ENCODE measurements at regions of chr9 and their contacts with region 1.

Region 1: GRCh38 chr9:36873247-36873875 is 160.7 kb downstream of the PAX5 start:
- DNase-seq: peak; percentile 81
- H3K4me3 Mint-ChIP-seq: no peak overlapping the region
- H3K27ac Mint-ChIP-seq: no peak overlapping the region
- H3K4me1 Mint-ChIP-seq: no peaks in the 10 kb centered on the region
- H3K27me3 Mint-ChIP-seq: peaks cover under 1% of the 10 kb centered on the region

Region 2: DNA sequence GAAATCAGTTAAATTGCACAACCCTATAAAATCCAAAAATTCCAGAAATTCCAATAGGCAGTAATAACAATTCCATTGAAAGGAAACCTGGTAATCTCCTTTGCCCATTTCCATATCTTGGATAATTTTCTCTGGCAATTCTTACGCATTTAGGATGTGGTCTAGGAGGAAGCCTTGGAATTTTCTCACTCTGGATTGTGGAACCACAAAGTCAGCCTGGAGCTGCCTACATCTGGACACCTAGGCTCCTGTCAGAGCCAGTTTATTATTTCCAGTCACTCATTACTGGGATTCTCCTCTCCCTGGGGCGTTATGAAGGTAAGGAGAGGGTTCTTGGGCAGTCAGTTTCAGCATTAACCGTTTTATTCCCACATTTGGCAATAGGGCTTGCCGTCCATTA is 574.8 kb before region 1 on chr9:
- CTCF ChIA-PET with region 1: no interaction called
- POLR2A ChIA-PET with region 1: no interaction called
- intact Hi-C with region 1: no loop called
- DNase-seq: no peak
- H3K4me3 Mint-ChIP-seq: no peak overlapping the region
- H3K27ac Mint-ChIP-seq: no peak overlapping the region
- H3K4me1 Mint-ChIP-seq: no peaks in the 10 kb centered on the region
- H3K27me3 Mint-ChIP-seq: no peaks in the 10 kb centered on the region

Region 3: GRCh38 chr9:36855448-36856315 is 17.7 kb before region 1 on chr9:
- CTCF ChIA-PET with region 1: interaction called, 36 read pairs
- POLR2A ChIA-PET with region 1: no interaction called
- intact Hi-C with region 1: no loop called
- DNase-seq: peak; percentile 65
- H3K4me3 Mint-ChIP-seq: no peak overlapping the region
- H3K27ac Mint-ChIP-seq: no peak overlapping the region
- H3K4me1 Mint-ChIP-seq: peaks cover 7% of the 10 kb centered on the region
- H3K27me3 Mint-ChIP-seq: peaks cover 2% of the 10 kb centered on the region

Region 4: GRCh38 chr9:36884721-36885120 is 11.4 kb after region 1 on chr9:
- CTCF ChIA-PET with region 1: interaction called, 15 read pairs
- POLR2A ChIA-PET with region 1: no interaction called
- intact Hi-C with region 1: no loop called
- DNase-seq: no peak
- H3K4me3 Mint-ChIP-seq: no peak overlapping the region
- H3K27ac Mint-ChIP-seq: no peak overlapping the region
- H3K4me1 Mint-ChIP-seq: no peaks in the 10 kb centered on the region
- H3K27me3 Mint-ChIP-seq: peaks cover 6% of the 10 kb centered on the region

Region 5: DNA sequence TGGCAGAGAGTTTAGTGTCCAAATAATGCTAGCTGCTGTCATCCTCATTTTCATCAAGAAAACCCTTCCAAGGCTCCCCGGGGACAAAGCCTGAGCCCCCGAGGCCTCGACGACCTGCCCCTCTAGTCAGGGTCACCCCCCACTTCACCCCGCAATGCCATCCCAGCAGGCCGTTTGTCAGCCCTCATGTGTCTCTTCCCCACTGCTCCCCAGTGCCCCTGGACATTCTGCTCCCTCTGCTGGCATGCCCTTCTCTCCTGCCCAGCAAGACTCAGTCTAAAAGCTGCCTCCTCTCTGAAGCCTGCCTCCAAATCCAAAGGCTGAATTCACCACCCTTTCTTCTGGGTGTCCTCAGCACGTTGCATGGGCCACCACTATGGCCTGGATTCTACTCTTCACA is 101.4 kb after region 1 on chr9:
- CTCF ChIA-PET with region 1: interaction called, 22 read pairs
- POLR2A ChIA-PET with region 1: no interaction called
- intact Hi-C with region 1: no loop called
- DNase-seq: no peak
- H3K4me3 Mint-ChIP-seq: no peak overlapping the region
- H3K27ac Mint-ChIP-seq: no peak overlapping the region
- H3K4me1 Mint-ChIP-seq: no peaks in the 10 kb centered on the region
- H3K27me3 Mint-ChIP-seq: peaks cover 18% of the 10 kb centered on the region

Region 6: DNA sequence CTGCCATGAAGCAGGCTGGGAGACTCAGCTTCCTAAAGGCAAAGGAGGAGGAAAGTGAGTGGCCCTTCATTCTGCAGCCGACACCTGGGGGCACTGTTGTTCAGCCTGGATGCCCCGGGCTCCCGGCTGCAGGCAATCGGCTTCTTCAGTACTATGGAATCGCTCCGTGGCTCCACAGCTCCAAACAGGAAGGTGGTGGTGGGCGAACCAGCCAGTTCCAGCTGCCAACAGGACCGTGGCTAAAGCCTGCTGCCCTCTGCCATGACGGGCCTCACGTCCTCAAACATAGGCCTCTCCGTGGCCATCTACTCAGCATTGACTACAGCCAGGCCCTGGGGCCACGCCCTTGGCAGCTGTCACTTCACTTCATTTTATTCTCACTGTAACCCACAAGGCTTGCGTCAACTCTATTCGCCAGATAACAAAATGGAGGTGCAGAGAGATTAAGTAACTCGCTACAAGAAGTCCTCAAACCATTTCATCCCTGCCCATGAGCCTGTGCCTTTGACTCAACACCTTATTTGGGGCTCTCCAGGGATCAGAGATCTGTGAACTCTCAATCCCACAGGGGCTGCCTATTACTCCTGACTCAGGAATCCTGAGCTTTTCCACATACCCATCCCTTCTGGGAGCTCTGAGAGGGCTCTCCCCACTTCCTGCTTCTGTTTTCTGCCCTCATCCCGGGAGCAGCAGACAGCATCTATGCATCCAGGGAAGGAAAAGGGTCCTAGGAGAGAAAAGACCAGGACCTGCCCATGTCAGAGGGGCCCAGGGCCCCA is 122.8 kb after region 1 on chr9:
- CTCF ChIA-PET with region 1: interaction called, 138 read pairs
- POLR2A ChIA-PET with region 1: interaction called, 4 read pairs
- intact Hi-C with region 1: loop called (anchors 1 kb)
- DNase-seq: peak; percentile 69
- H3K4me3 Mint-ChIP-seq: no peak overlapping the region
- H3K27ac Mint-ChIP-seq: no peak overlapping the region
- H3K4me1 Mint-ChIP-seq: peaks cover 2% of the 10 kb centered on the region
- H3K27me3 Mint-ChIP-seq: peaks cover 23% of the 10 kb centered on the region

Region 7: GRCh38 chr9:37329576-37329975 is 456.2 kb after region 1 on chr9:
- CTCF ChIA-PET with region 1: interaction called, 24 read pairs
- POLR2A ChIA-PET with region 1: no interaction called
- intact Hi-C with region 1: no loop called
- DNase-seq: no peak
- H3K4me3 Mint-ChIP-seq: no peak overlapping the region
- H3K27ac Mint-ChIP-seq: no peak overlapping the region
- H3K4me1 Mint-ChIP-seq: no peaks in the 10 kb centered on the region
- H3K27me3 Mint-ChIP-seq: no peaks in the 10 kb centered on the region